IMR-90 (cell line): ENCODE measurements at regions of chr2 and their contacts with region 1.

Region 1: DNA sequence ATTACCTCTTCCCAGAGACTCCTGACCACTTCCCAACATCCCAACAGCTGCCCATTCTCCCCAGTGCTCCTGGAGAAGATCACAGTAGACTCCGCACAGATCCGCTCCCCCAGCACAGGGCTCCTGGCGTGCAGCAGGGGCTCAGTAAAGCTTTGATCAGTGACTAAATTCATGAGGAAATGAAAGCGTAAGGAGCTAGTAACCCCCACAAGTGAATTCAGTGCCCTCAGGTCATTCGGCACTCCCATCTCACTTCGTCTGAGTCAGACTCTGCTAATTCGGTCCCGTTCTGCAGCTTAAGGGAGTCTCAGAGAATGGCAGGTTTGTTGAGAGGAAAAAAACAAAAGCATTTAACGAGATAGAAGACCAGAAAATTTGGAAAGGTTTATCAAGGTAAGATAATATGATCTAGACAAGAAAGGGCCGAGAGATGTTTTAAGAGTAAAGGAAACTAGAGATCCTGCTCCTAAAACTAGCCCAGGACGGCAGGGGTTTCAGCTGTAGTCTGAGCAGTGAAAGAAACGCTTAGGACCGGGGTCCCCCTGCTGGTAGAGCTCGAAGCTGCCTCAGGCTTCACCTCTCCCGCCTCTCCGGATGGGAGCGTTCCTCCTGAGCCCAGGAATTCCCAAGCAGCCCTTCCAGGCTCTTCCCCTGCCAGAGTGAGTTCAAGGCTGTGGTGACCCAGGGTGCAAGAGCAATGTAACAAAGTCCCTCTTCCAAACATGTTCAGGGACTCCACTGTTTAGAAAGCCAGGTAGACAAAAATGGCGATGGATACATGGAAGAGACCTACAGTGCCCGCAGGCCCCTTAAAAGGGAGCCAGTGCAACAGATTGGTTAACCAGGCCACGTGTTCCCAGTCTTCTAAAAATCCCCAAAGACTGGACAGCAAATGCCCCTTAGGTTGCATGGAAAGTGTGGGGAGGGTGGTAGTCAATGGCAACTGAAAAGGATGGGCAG is 127.3 kb downstream of the DNER start:
- DNase-seq: peak; percentile 60
- ATAC-seq: peak; percentile 99
- H3K4me3 ChIP-seq: no peak overlapping the region
- H3K27ac ChIP-seq: no peak overlapping the region
- H3K4me1 ChIP-seq: no peaks in the 10 kb centered on the region; the same call in 1 of the 2 replicates
- H3K27me3 ChIP-seq: no peaks in the 10 kb centered on the region
- CTCF ChIP-seq: peak; percentile 60
- POLR2A ChIP-seq: no peak
- RAD21 ChIP-seq: peak; percentile 69

Region 2: GRCh38 chr2:227890495-227891079 is 1696.4 kb before region 1 on chr2:
- CTCF ChIA-PET with region 1: no interaction called
- POLR2A ChIA-PET with region 1: no interaction called
- dilution Hi-C with region 1: no loop called
- in situ Hi-C with region 1: no loop called
- intact Hi-C with region 1: loop called (anchors 1 kb)
- DNase-seq: peak; percentile 61
- ATAC-seq: peak; percentile 82
- H3K4me3 ChIP-seq: no peak overlapping the region
- H3K27ac ChIP-seq: no peak overlapping the region
- H3K4me1 ChIP-seq: 0 out of 2 replicates have a peak, but pooled peaks cover 1% of the 10 kb centered on the region
- H3K27me3 ChIP-seq: no peaks in the 10 kb centered on the region
- CTCF ChIP-seq: peak; percentile 60
- POLR2A ChIP-seq: no peak
- RAD21 ChIP-seq: peak; percentile 60

Region 3: GRCh38 chr2:228681426-228681825 is 905.6 kb before region 1 on chr2:
- CTCF ChIA-PET with region 1: no interaction called
- POLR2A ChIA-PET with region 1: no interaction called
- dilution Hi-C with region 1: no loop called
- in situ Hi-C with region 1: loop called (anchors 25 kb)
- intact Hi-C with region 1: loop called (anchors 10 kb)
- DNase-seq: peak; percentile 49
- ATAC-seq: peak; percentile 59
- H3K4me3 ChIP-seq: no peak overlapping the region
- H3K27ac ChIP-seq: no peak overlapping the region
- H3K4me1 ChIP-seq: peaks cover 2% of the 10 kb centered on the region; the same call in 1 of the 2 replicates
- H3K27me3 ChIP-seq: no peaks in the 10 kb centered on the region
- CTCF ChIP-seq: peak; percentile 33
- POLR2A ChIP-seq: no peak
- RAD21 ChIP-seq: peak; percentile 25

Region 4: DNA sequence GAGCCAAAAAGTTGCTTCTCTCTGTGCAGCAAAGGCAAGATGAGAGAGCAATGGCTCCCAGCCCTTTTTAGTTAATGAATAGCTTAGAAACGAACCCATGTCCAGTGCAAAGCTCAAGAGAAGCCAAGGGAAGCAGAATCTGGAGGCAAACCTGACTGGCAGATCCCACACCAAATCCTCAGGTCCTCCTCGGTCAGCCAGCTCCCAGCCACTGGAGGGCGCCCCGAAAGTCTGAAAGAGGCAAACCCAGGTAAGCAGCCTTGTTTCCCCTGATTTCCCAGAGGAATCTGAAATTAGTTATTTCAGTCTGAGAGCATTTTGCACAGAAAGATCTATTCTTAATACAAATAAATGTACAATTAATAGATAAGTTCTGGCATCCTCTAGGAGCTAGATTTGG is 244.7 kb before region 1 on chr2:
- CTCF ChIA-PET with region 1: no interaction called
- POLR2A ChIA-PET with region 1: no interaction called
- dilution Hi-C with region 1: no loop called
- in situ Hi-C with region 1: no loop called
- intact Hi-C with region 1: loop called (anchors 1 kb)
- DNase-seq: no peak
- ATAC-seq: no peak
- H3K4me3 ChIP-seq: no peak overlapping the region
- H3K27ac ChIP-seq: no peak overlapping the region
- H3K4me1 ChIP-seq: no peaks in the 10 kb centered on the region
- H3K27me3 ChIP-seq: no peaks in the 10 kb centered on the region
- CTCF ChIP-seq: no peak
- POLR2A ChIP-seq: no peak
- RAD21 ChIP-seq: no peak

Region 5: DNA sequence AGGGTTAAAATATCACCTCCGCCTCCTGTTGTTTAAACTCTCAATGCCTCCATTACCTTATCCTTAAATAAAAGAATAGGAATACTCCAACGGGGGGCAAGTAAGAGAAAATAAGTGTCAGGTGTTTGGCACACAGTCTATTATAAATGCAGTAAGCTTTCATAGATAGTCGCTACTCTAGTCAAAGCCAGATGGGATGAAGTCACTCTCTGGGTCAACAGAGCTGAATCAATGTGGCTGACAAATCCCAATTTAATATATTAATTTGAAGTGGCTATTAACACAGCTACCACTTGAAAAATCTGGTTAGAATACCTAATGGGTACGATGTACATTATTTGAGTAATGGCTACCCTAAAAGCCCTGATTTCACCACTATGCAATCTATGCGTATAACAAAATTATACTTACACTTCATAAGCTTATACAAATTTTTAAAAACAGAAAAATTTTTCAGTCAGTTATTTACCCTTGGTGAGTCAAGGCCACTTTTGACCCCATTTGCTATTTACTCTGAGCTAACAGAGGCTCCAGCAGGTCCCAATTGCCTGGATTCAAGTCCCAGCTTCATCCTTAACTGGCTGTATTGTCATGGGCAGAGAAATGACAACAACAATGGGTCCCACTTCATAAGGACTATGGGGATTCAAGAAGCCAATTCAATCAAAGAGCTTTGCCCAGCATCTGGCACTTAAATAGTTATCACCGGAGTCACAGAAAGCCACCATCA is 148.4 kb before region 1 on chr2:
- CTCF ChIA-PET with region 1: no interaction called
- POLR2A ChIA-PET with region 1: no interaction called
- dilution Hi-C with region 1: no loop called
- in situ Hi-C with region 1: loop called (anchors 5 kb)
- intact Hi-C with region 1: no loop called
- DNase-seq: no peak
- ATAC-seq: no peak
- H3K4me3 ChIP-seq: no peak overlapping the region
- H3K27ac ChIP-seq: no peak overlapping the region
- H3K4me1 ChIP-seq: no peaks in the 10 kb centered on the region
- H3K27me3 ChIP-seq: no peaks in the 10 kb centered on the region
- CTCF ChIP-seq: no peak
- POLR2A ChIP-seq: no peak
- RAD21 ChIP-seq: no peak

Region 6: GRCh38 chr2:229601396-229601795 is 14.4 kb after region 1 on chr2:
- CTCF ChIA-PET with region 1: no interaction called
- POLR2A ChIA-PET with region 1: no interaction called
- dilution Hi-C with region 1: no loop called
- in situ Hi-C with region 1: no loop called
- intact Hi-C with region 1: no loop called
- DNase-seq: no peak
- ATAC-seq: no peak
- H3K4me3 ChIP-seq: no peak overlapping the region
- H3K27ac ChIP-seq: no peak overlapping the region
- H3K4me1 ChIP-seq: no peaks in the 10 kb centered on the region
- H3K27me3 ChIP-seq: no peaks in the 10 kb centered on the region
- CTCF ChIP-seq: no peak
- POLR2A ChIP-seq: no peak
- RAD21 ChIP-seq: no peak